ENCODE measurements at regions of chr9 and their contacts with region 1.

Region 1: DNA sequence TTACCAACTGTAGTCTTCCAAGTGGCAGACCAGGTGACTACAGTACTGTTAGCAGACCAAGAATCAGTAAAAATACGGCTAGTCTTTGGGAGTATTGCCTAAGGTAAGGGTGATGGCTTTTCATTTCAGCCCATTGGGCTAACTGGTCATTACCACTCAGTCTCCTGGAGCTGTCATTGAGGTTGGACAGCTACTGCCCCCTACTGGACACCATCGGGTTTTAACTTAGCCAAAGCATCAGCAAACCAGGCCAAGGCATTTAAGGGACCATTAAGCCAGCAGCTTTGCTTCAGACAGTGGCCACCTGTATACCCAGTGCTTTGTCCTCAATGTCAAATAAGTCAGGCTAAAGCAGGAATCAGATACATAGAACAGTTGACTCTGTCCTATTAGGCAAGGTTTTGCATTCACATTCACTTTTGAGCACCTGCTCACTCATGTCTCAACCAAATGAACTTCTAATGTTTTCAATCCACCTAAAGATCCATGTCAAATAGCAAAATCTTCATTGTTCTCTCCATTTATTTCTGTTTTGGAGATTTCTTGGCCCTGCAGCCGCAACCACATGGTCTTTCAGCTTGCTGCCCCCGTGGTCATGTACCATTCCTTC is 117.2 kb downstream of the INVS start:
- DNase-seq: no peak
- ATAC-seq: no peak

Region 2: DNA sequence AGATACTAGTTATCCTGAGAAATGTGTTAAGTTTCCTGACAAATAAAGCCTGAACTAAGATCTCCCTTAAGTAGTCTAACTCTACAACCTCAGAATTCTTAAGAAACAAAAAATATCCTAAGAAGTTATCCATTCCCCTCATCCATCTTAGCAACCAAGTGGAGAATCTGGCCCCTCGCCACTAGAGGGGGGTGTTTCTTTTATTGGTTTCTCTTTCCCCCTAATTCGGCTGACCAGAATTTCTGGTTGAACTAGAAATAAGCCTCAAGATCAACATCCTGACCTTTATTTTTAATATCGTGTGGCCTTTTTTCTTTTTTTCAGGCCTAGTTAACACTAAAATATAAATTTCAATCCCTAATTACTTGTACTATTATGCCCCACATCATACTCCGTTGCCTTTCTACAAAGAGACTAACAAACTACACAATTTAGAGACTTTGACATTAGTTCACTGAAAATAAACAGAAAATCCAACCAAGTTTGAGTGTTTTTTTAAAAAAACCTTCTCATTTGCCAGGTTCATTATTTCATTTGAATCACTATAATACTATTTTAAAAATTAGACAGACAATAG is 408.9 kb before region 1 on chr9:
- intact Hi-C with region 1: loop called (anchors 10 kb)
- DNase-seq: no peak
- ATAC-seq: no peak